ENCODE measurements at regions of chr15 and their contacts with region 1.

Region 1: DNA sequence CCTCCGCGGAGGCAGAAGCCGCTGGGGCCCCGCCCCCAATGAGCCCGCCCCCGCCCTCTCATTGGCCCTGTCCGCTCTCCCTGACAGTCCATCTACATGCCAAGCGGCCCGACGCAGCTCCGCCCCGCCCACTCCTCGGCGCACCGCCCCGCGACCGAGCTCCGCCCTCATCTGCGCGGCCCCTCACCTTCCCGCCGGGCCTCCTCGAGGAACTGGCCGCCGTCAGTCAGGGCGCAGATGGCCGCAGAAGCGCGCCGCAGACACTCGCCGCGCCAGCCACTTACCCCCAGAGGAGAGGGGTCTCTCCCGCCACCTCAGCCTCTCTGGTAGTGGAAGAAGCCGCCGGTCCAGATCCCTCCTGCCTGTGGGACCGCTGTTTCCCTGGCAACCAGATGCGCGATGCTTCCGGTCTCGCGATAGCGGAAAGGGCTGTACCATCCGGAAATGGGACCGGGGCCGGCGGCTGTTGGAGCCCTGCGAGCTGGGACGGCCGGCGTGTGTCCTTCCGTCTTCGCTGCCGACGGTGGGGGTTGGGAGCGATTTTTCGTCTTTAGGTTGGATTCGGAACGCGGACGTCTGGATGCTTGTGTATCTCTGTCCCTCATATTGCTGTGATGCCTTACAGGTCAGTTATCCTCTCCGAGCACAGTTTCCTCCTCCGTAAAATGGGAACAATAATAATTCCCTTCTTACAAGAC is at the start of gene FSIP1:
- DNase-seq: peak; percentile 81 to 88
- ATAC-seq: peak; percentile 97
- H3K4me3 ChIP-seq: peak within 1 kb of the TSS; percentile 64 to 99 (median 88)
- H3K27ac ChIP-seq: peak within 1 kb of the TSS; percentile 49 to 75 (median 68)
- H3K4me1 ChIP-seq: peaks cover 0 to 14% of the 10 kb centered on the region in 2 donors
- H3K27me3 ChIP-seq: no peaks in the 10 kb centered on the region
- CTCF ChIP-seq: no peak
- POLR2A ChIP-seq: peak in 1 of 2 donors; percentile 25
- total RNA-seq, gene FSIP1: 0.11 to 23.9 (median 1.0) TPM in 3 of 4 donors, not detected in the other

Region 2: DNA sequence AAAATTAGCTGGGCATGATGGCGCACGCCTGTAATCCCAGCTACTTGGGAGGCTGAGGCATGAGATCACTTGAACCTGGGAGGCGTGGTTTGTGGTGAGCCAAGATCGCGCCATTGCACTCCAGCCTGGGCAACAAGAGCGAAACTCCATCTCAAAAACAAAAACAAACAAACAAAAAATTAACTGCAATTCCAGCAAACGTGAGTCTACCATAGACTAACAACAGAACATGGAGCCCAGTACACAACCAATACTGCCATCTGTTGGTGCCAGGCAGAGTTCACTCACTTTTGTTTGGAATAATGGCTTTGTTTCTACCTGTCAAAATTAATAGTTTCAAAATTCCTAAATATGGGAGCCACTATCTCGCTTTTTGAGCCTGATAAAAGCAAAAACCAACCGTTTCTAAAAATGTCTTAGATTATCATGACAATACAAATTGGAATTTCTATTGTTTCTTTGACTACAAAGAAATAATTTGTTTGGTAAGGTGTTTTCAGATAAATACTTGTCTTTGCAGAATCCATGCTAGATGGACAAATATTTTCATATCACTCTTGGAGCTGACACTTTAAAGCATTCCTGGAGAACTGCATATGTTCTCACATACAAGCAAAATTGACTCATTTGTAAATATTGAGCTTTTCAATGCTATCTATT is 92.4 kb after region 1 on chr15:
- in situ Hi-C with region 1: loop called in 1 of 4 experiments (anchors 5 kb)
- intact Hi-C with region 1: loop called (anchors 5 kb)
- DNase-seq: no peak
- ATAC-seq: no peak
- H3K4me3 ChIP-seq: no peak overlapping the region
- H3K27ac ChIP-seq: no peak overlapping the region
- H3K4me1 ChIP-seq: no peaks in the 10 kb centered on the region
- H3K27me3 ChIP-seq: no peaks in the 10 kb centered on the region
- CTCF ChIP-seq: peak in 4 of 5 experiments; percentile 8 to 52 (median 36)
- POLR2A ChIP-seq: no peak

Region 3: DNA sequence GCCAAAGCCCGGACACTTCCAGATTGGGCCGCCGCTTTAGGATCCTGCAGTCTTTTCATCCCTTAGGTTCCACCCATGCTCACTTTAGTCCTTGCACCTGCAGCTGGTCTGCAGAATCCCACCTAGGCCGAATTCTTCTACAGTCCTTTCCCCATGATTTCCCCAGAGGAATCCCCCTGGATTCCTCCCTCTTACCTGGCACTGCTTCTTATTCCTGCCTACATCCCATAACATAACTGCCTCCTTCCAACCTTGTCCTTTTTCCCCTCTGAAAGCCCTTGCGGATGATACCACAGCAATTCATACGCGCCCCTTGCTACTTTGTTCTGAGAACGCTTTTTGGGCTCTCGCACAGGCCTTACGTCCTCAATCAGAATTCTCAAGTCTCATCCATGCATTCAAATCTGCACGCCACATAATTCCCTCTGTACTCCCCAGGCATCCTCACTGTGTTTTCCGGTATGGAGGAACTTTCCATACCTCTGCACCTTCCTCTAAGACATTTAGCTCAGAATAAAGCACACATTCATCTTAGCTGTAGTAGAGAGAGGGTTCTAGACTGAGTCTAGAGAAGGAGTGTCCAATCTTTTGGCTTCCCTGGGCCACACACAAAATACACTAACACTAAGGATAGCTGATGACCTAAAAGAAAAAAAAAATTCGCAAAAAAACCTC is 151.9 kb after region 1 on chr15:
- in situ Hi-C with region 1: no loop called
- intact Hi-C with region 1: loop called (anchors 1 kb)
- DNase-seq: no peak
- ATAC-seq: peak in 1 of 2 donors; percentile 15
- H3K4me3 ChIP-seq: peak overlapping the region; percentile 76 to 82 (median 78)
- H3K27ac ChIP-seq: peak overlapping the region; percentile 81 to 89 (median 88)
- H3K4me1 ChIP-seq: peaks cover 20 to 22% of the 10 kb centered on the region in 2 donors
- H3K27me3 ChIP-seq: no peaks in the 10 kb centered on the region
- CTCF ChIP-seq: no peak
- POLR2A ChIP-seq: no peak

Region 4: GRCh38 chr15:40044717-40045571 is 262.4 kb after region 1 on chr15:
- in situ Hi-C with region 1: no loop called
- intact Hi-C with region 1: loop called (anchors 10 kb)
- DNase-seq: peak; percentile 79 to 84
- ATAC-seq: peak; percentile 80 to 87
- H3K4me3 ChIP-seq: peak overlapping the region in 2 of 4 donors; percentile 19 to 26
- H3K27ac ChIP-seq: peak overlapping the region; percentile 30 to 60 (median 49)
- H3K4me1 ChIP-seq: peaks cover 13 to 30% of the 10 kb centered on the region in 2 donors
- H3K27me3 ChIP-seq: no peaks in the 10 kb centered on the region
- CTCF ChIP-seq: peak; percentile 86 to 98 (median 91)
- POLR2A ChIP-seq: no peak

Region 5: DNA sequence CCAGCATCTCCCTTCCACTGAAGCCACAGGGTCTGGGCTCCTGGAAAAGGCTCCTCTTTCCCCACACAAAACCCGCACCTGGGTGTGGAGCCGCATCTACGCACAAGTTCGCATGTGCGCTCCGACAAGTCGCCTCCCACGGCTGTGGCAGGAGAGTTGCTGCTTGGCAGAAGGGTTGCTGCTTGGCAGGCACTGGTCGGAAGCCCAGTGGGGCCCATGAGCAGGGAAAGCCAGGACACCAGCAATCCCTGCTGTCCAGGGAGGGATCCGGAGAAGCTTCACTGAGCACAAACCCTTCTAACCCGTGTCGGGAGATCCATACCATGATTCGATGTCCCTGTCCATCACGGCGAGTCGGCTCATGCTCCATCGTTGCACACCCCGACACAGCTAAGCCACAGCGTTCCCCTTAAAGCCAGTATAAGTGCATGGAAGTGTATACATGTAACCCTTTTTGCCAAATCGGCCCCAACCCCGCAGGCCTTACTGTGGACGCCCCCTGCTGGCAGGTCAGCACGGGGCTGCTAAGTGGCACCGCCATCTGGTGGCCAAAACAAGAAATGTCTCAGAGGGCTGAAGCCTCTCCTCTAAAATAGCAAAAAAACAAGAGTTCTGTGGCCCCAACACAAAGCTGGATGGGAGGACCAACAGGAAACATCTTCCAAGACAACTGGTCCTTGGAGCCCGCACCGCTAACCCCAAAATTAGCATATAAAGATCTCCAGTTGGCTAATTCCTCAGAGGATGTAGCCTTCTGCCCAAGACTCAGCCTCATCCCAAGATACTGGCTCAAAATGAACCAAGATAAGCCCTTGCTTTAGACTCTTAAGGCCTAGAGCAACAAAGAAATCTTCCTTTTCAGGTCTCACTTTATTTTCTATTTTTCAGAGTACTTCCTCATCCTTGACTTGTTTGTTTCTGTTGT is 492.0 kb after region 1 on chr15:
- in situ Hi-C with region 1: no loop called
- intact Hi-C with region 1: loop called (anchors 10 kb)
- DNase-seq: peak; percentile 36 to 64
- ATAC-seq: peak; percentile 75 to 76
- H3K4me3 ChIP-seq: no peak overlapping the region
- H3K27ac ChIP-seq: no peak overlapping the region
- H3K4me1 ChIP-seq: peaks cover 2% of the 10 kb centered on the region in 2 donors
- H3K27me3 ChIP-seq: peaks cover 7 to 15% (median 10%) of the 10 kb centered on the region in 3 donors
- CTCF ChIP-seq: peak; percentile 99 to 100 (median 100)
- POLR2A ChIP-seq: no peak

Measured in gastrocnemius medialis (tissue), 4 donors.